Sigmoid colon (tissue), 7 donors: ENCODE measurements at regions of chr19 and their contacts with region 1.

Region 1: GRCh38 chr19:45886427-45887199 is 672 bp upstream of the IRF2BP1 start:
- DNase-seq: peak; percentile 97
- H3K4me3 ChIP-seq: peak overlapping the region; percentile 47 to 84 (median 68)
- H3K27ac ChIP-seq: peak overlapping the region; percentile 84 to 92 (median 89)
- H3K4me1 ChIP-seq: peaks cover 0 to 45% (median 40%) of the 10 kb centered on the region in 4 donors
- H3K27me3 ChIP-seq: no peaks in the 10 kb centered on the region
- CTCF ChIP-seq: no peak
- EP300 ChIP-seq: peak in 2 of 4 donors; percentile 25 to 66
- POLR2A ChIP-seq: peak; percentile 48 to 62

Region 2: DNA sequence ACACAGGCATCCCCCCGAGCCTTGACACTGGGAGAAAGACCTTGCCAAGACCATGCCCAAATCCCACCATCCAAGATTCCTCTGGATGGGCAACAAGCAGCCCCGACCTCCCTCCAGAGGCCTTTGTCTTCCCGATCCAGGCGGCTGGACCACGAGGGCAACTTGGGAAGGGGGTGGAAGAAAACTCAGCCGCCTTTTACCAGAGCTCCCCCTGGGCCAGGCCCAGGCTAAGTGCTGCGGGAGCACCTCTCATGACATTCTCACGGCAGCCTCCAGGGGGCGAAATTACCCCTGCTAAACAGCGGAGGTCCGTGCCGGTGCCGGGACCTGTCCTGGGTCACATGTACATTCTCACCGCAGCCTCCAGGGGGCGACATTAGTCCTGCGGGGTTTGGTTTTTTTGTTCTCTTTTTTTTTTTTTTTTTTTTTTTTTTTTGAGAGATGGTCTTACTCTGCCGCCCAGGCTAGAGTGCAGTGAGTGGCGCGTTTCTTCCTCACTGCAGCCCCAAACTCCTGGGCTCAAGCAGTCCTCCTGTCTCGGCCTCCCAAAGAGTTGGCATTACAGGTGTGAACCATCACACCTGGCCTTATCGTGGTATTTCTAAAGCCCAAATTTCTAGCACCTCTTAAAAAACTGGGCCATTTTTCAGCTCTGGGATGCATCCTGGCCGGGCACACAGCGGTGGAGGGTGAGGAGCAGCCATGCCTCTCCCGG is 69.4 kb before region 1 on chr19:
- intact Hi-C with region 1: loop called (anchors 5 kb)
- DNase-seq: peak; percentile 96
- H3K4me3 ChIP-seq: no peak overlapping the region
- H3K27ac ChIP-seq: peak overlapping the region in 1 of 4 donors; percentile 16
- H3K4me1 ChIP-seq: peaks cover 0 to 23% (median 18%) of the 10 kb centered on the region in 4 donors
- H3K27me3 ChIP-seq: peaks cover 8 to 42% (median 24%) of the 10 kb centered on the region in 3 donors
- CTCF ChIP-seq: peak; percentile 82 to 92 (median 86)
- EP300 ChIP-seq: no peak
- POLR2A ChIP-seq: no peak

Region 3: GRCh38 chr19:45862564-45863334 is 23.9 kb before region 1 on chr19 and contains the start of gene SYMPK:
- intact Hi-C with region 1: loop called (anchors 1 kb)
- DNase-seq: peak; percentile 99
- H3K4me3 ChIP-seq: peak within 1 kb of the TSS; percentile 94 to 99 (median 96)
- H3K27ac ChIP-seq: peak within 1 kb of the TSS; percentile 92 to 97 (median 96)
- H3K4me1 ChIP-seq: peaks cover 0 to 33% (median 24%) of the 10 kb centered on the region in 4 donors
- H3K27me3 ChIP-seq: peaks cover 8 to 32% (median 24%) of the 10 kb centered on the region in 3 donors
- CTCF ChIP-seq: no peak
- EP300 ChIP-seq: peak in 1 of 4 donors; percentile 70
- POLR2A ChIP-seq: peak; percentile 56 to 61
- total RNA-seq, gene SYMPK: 18.2 to 31.3 (median 25.3) TPM

Region 4: GRCh38 chr19:45902651-45903625 is 16.3 kb after region 1 on chr19:
- intact Hi-C with region 1: loop called (anchors 2 kb)
- DNase-seq: peak; percentile 99
- H3K4me3 ChIP-seq: peak overlapping the region; percentile 71 to 80 (median 74)
- H3K27ac ChIP-seq: peak overlapping the region; percentile 83 to 89 (median 84)
- H3K4me1 ChIP-seq: peaks cover 0 to 26% (median 21%) of the 10 kb centered on the region in 4 donors
- H3K27me3 ChIP-seq: no peaks in the 10 kb centered on the region
- CTCF ChIP-seq: peak in 1 of 4 experiments; percentile 27
- EP300 ChIP-seq: no peak
- POLR2A ChIP-seq: peak; percentile 45 to 63

Region 5: GRCh38 chr19:45994989-45995714 is 108.5 kb after region 1 on chr19 and contains the start of gene CCDC61:
- intact Hi-C with region 1: loop called (anchors 5 kb)
- DNase-seq: peak; percentile 98
- H3K4me3 ChIP-seq: peak within 1 kb of the TSS; percentile 60 to 87 (median 74)
- H3K27ac ChIP-seq: peak within 1 kb of the TSS; percentile 75 to 85 (median 82)
- H3K4me1 ChIP-seq: peaks cover 0 to 18% (median 16%) of the 10 kb centered on the region in 4 donors
- H3K27me3 ChIP-seq: peaks cover 0 to 18% (median 10%) of the 10 kb centered on the region in 3 donors
- CTCF ChIP-seq: no peak
- EP300 ChIP-seq: no peak
- POLR2A ChIP-seq: peak; percentile 74 to 92
- total RNA-seq, gene CCDC61: 5.0 to 15.2 (median 8.0) TPM

Region 6: GRCh38 chr19:46340051-46340659 is 453.5 kb after region 1 on chr19:
- intact Hi-C with region 1: loop called (anchors 5 kb)
- DNase-seq: no peak
- H3K4me3 ChIP-seq: no peak overlapping the region
- H3K27ac ChIP-seq: no peak overlapping the region
- H3K4me1 ChIP-seq: no peaks in the 10 kb centered on the region
- H3K27me3 ChIP-seq: no peaks in the 10 kb centered on the region
- CTCF ChIP-seq: no peak
- EP300 ChIP-seq: no peak
- POLR2A ChIP-seq: no peak